WTC11 (cell line): ENCODE measurements at regions of chr13 and their contacts with region 1.

Region 1: DNA sequence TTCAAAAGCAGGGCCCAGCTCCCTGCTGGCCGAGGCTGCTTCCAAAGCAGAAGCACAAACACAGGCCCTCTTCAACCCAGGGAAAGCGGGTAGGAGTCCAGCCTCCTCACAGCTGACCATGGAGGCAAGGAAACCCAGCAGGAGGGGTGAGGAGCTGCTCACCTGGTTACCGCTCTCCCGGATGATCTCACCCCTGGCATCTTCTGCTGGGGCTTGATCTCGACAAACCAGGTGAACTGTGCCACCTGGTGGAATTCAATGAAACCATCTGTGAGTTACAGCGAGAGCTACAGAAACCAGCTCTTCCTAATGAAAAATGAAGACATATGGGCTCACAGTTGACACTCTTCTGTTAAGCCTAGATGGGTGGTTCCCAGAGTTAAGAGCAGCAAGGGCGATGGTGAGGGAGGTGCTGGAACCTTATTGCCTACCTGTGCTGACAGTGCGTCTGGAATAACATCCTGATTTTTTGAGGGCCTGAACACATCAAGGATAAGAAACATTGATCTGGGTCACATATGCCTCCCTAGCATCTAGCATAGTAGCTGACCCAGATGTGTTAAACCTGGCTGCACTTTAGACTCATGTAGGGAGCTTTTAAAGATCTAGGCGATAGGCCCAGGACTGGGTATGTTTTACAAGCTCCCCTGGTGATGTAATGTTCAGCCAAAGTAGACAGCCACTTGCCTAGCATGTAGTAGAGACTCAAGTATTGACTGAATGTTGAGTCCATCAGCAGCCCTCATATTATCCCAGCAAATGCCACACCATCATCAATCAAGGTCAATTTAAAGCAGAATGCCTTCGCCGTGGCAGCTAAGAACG is 6.1 kb downstream of the DHRS12 start:
- DNase-seq: peak; percentile 66
- ATAC-seq: peak; percentile 84
- H3K4me3 Mint-ChIP-seq: no peak overlapping the region
- H3K27ac Mint-ChIP-seq: no peak overlapping the region
- H3K4me1 Mint-ChIP-seq: peaks cover 45% of the 10 kb centered on the region
- H3K27me3 Mint-ChIP-seq: no peaks in the 10 kb centered on the region
- CTCF ChIP-seq: 0 out of 2 replicates have a peak, but pooled peaks have one; percentile 33

Region 2: GRCh38 chr13:51444922-51445321 is 353.0 kb before region 1 on chr13:
- CTCF ChIA-PET with region 1: interaction called, 10 read pairs
- POLR2A ChIA-PET with region 1: interaction called, 3 read pairs
- DNase-seq: no peak
- ATAC-seq: no peak
- H3K4me3 Mint-ChIP-seq: no peak overlapping the region
- H3K27ac Mint-ChIP-seq: no peak overlapping the region
- H3K4me1 Mint-ChIP-seq: peaks cover 16% of the 10 kb centered on the region
- H3K27me3 Mint-ChIP-seq: no peaks in the 10 kb centered on the region
- CTCF ChIP-seq: no peak

Region 3: GRCh38 chr13:51740698-51741097 is 57.2 kb before region 1 on chr13:
- CTCF ChIA-PET with region 1: no interaction called
- POLR2A ChIA-PET with region 1: no interaction called
- DNase-seq: no peak
- ATAC-seq: no peak
- H3K4me3 Mint-ChIP-seq: no peak overlapping the region
- H3K27ac Mint-ChIP-seq: no peak overlapping the region
- H3K4me1 Mint-ChIP-seq: no peaks in the 10 kb centered on the region
- H3K27me3 Mint-ChIP-seq: no peaks in the 10 kb centered on the region
- CTCF ChIP-seq: no peak

Region 4: GRCh38 chr13:51767100-51767499 is 30.8 kb before region 1 on chr13:
- CTCF ChIA-PET with region 1: interaction called, 65 read pairs
- POLR2A ChIA-PET with region 1: no interaction called
- DNase-seq: no peak
- ATAC-seq: peak; percentile 38
- H3K4me3 Mint-ChIP-seq: no peak overlapping the region
- H3K27ac Mint-ChIP-seq: no peak overlapping the region; the same call in 1 of the 2 replicates
- H3K4me1 Mint-ChIP-seq: peaks cover 23% of the 10 kb centered on the region
- H3K27me3 Mint-ChIP-seq: no peaks in the 10 kb centered on the region
- CTCF ChIP-seq: no peak

Region 5: GRCh38 chr13:51814825-51815650 is 17.2 kb after region 1 on chr13:
- CTCF ChIA-PET with region 1: interaction called, 11 read pairs
- POLR2A ChIA-PET with region 1: no interaction called
- DNase-seq: peak; percentile 80
- ATAC-seq: peak; percentile 77
- H3K4me3 Mint-ChIP-seq: no peak overlapping the region; the same call in 1 of the 2 replicates
- H3K27ac Mint-ChIP-seq: peak overlapping the region; percentile 57; the same call in 1 of the 2 replicates
- H3K4me1 Mint-ChIP-seq: peaks cover 37% of the 10 kb centered on the region
- H3K27me3 Mint-ChIP-seq: peaks cover under 1% of the 10 kb centered on the region; the same call in 1 of the 2 replicates
- CTCF ChIP-seq: peak; percentile 74